Left cardiac atrium (tissue), 4 donors: ENCODE measurements at regions of chr12 and their contacts with region 1.

Region 1: GRCh38 chr12:110100315-110100970 is 23.7 kb upstream of the IFT81 start:
- DNase-seq: peak; percentile 72
- ATAC-seq: peak; percentile 69 to 77

Region 2: DNA sequence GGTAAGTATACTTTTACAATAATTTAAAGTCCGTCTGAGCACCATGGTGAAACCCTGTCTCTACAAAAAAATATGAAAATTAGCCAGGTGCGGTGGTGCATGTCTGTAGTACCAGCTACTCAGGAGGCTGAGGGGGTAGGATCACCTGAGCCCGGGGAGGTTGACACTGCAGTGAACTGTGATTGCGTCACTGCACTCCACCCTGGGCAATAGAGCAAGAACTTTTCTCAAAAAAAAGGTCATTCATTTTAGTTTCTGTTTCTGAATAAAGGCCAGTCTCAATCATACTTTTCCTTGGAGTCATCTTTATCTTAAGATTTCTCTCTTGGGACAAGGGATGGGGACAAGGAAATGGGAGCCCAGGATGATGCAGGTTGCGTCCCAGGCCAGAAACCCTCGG is 88.3 kb before region 1 on chr12:
- intact Hi-C with region 1: no loop called
- DNase-seq: no peak
- ATAC-seq: no peak

Region 3: DNA sequence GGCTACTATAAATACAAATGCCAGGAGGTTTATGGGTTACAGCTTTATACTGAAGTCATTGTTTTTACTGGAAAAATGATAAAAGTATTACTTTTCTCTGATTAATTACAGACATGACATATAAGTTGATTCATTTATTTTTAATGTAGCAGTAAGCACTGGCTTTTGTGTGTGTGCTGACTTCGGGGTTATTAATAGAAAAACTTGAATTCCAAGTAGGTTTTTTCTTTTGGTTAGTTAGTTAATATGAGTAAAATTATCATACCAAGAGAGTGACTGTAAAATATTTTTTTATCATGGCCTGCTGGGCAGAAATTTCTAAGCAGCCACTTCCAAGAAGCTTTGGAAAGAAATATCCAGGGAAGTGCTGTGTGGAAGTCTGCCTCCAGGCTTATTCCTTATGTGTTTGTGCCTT is 80.2 kb after region 1 on chr12:
- intact Hi-C with region 1: loop called in 1 of 2 experiments (anchors 5 kb)
- DNase-seq: no peak
- ATAC-seq: no peak

Region 4: GRCh38 chr12:110224379-110225304 is 124.2 kb after region 1 on chr12:
- intact Hi-C with region 1: loop called in 1 of 2 experiments (anchors 10 kb)
- DNase-seq: no peak
- ATAC-seq: peak; percentile 81 to 84

Region 5: DNA sequence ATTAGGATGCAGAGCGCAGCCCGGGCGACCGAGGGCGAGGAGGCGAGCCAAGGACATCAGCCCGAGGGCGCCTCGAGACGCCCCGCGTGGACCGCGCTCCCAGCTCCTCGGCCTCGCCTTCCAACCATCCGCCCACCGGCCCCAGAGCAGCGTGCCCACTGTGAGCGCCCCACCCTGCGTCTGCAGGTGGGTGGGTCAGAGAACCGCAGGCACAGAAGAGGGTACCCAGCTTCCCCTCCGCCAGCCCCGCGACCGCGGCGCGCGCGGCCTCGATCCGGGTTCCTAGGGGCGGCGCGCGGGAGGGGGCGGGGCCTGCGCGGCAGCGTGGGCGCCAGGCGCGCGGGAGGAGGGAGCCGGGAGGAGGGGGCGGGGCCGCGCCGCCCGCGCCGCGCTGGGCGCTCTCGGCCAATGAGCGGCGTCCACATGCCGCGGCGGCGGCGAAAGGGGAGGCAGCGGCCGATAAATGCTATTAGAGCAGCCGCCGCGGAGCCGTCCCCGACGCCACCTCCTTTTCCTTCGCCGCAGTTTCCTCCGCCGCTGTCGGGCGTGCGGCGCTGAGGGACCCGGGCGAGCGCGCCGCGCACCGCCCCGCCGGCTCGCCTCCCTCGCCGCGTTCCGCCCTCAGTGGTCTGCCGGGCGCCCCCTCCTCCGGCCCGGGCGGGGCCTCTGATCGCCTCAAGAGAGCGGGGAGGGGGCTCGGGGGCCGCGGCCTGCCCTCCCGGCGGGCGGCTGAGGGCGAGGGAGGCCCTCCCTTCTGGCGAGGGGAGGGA is 180.5 kb after region 1 on chr12 and contains the start of gene ATP2A2:
- intact Hi-C with region 1: loop called in 1 of 2 experiments (anchors 10 kb)
- DNase-seq: peak; percentile 93
- ATAC-seq: peak; percentile 94
- total RNA-seq, gene ATP2A2: 2,696 to 3,455 TPM

Region 6: DNA sequence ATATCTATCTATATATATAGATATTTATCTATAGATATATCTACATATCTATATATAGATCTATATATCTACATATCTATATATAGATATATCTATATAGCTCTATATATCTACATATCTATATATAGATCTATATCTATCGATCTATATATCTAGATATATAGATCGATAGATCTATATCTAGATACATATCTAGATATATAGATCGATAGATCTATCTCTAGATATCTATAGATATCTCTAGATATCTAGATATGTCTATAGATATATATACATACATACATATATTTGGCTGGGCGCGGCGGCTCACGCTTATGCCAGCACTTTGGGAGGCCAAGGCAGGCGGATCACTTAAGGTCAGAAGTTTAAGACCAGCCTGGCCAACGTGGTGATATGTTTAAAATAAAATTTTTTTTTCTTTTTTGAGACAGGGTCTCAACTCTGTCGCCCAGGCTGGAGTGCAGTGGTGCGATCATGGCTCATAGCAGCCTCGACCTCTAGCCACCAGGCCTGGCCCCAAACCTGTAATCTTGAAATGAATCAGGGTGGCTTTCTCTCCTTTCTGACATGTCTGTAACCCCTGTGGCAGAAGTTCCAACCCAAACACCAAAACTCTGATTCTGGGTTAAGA is 331.6 kb after region 1 on chr12:
- intact Hi-C with region 1: loop called in 1 of 2 experiments (anchors 2 kb)
- DNase-seq: no peak
- ATAC-seq: no peak